HepG2 (cell line): ENCODE measurements at regions of chr5 and their contacts with region 1.

Region 1: DNA sequence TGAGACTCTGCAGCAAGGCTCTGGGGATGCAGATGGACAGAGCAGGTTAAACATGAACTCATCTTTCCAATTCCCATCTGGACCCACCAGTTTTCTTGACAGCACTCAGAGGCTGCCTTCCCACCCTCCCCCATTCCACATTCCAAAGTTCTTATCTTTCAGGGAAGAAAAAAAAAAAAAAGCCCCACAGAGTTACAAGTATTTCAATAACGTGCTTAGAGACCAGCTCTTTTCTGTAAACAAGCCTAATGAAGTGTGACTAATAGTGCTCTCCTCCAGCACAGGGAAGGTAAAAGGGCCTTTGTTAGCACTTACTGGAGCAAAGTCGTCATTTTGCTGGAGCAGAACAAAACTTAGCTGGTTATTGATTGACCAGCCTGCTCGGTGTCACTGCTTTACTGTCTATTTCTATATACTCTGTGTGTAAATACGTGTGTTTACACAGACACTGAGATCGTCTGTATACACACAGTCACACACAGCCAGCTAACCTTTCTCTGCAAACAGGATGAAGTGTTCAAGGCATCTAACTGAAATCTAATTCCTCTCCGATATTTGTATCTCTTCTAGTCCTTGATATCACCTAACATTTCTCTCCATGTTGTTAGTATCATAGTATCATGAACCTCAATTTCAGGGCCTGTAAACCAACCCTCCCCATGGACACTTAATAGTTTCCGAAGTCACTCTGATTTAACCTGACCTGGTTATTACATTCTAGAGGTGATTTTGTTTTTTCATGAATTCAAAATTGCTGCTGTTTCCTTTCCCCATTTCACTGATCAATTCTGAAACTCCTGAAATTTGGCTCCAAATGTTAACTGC is 84.9 kb downstream of the ZNF608 start:
- DNase-seq: peak; percentile 99
- ATAC-seq: peak; percentile 92
- H3K4me3 ChIP-seq: peak overlapping the region; percentile 5 to 47 (median 12); a peak in 2 of 6 replicates
- H3K27ac ChIP-seq: peak overlapping the region; percentile 61
- H3K4me1 ChIP-seq: peaks cover 78% of the 10 kb centered on the region
- H3K27me3 ChIP-seq: no peaks in the 10 kb centered on the region
- CTCF ChIP-seq: no peak
- EP300 ChIP-seq: peak; percentile 62 to 94; a peak in 3 of 4 replicates
- POLR2A ChIP-seq: no peak
- RAD21 ChIP-seq: 0 out of 2 replicates have a peak, but pooled peaks have one; percentile 10

Region 2: GRCh38 chr5:124583469-124584350 is 77.8 kb before region 1 on chr5:
- CTCF ChIA-PET with region 1: no interaction called
- POLR2A ChIA-PET with region 1: interaction called, 8 read pairs
- in situ Hi-C with region 1: loop called (anchors 5 kb)
- intact Hi-C with region 1: loop called (anchors 1 kb)
- DNase-seq: peak; percentile 65
- ATAC-seq: no peak
- H3K4me3 ChIP-seq: no peak overlapping the region
- H3K27ac ChIP-seq: no peak overlapping the region
- H3K4me1 ChIP-seq: peaks cover 58% of the 10 kb centered on the region
- H3K27me3 ChIP-seq: no peaks in the 10 kb centered on the region
- CTCF ChIP-seq: no peak
- EP300 ChIP-seq: 0 out of 4 replicates have a peak, but pooled peaks of 1 of the 2 experiments have one; percentile 8
- POLR2A ChIP-seq: no peak
- RAD21 ChIP-seq: no peak

Region 3: DNA sequence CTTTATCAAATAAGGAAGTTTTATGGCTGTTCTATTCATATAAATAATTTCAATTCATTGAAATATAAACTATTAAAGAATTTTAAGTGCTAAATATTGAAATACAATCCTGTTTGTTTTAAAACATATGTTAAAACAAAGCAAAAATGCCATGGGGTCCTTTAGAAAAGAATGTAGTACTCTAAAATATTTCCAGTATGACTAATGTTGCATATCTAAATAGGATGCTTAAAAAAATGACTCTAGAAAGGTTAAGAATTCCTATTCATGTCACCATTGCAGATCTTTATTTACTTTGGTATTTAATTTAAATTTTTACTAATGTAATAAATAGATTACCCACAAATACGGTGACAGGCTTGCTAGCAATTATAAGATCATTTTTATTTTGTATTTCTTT is 47.4 kb before region 1 on chr5:
- CTCF ChIA-PET with region 1: no interaction called
- POLR2A ChIA-PET with region 1: no interaction called
- in situ Hi-C with region 1: no loop called
- intact Hi-C with region 1: no loop called
- DNase-seq: no peak
- ATAC-seq: no peak
- H3K4me3 ChIP-seq: no peak overlapping the region
- H3K27ac ChIP-seq: no peak overlapping the region
- H3K4me1 ChIP-seq: no peaks in the 10 kb centered on the region
- H3K27me3 ChIP-seq: no peaks in the 10 kb centered on the region
- CTCF ChIP-seq: no peak
- EP300 ChIP-seq: no peak
- POLR2A ChIP-seq: no peak
- RAD21 ChIP-seq: no peak

Region 4: GRCh38 chr5:124649491-124650146 is 11.9 kb before region 1 on chr5:
- CTCF ChIA-PET with region 1: no interaction called
- POLR2A ChIA-PET with region 1: interaction called, 3 read pairs
- in situ Hi-C with region 1: no loop called
- intact Hi-C with region 1: loop called (anchors 1 kb)
- DNase-seq: no peak
- ATAC-seq: no peak
- H3K4me3 ChIP-seq: no peak overlapping the region
- H3K27ac ChIP-seq: no peak overlapping the region
- H3K4me1 ChIP-seq: peaks cover 80% of the 10 kb centered on the region
- H3K27me3 ChIP-seq: no peaks in the 10 kb centered on the region
- CTCF ChIP-seq: no peak
- EP300 ChIP-seq: no peak
- POLR2A ChIP-seq: no peak
- RAD21 ChIP-seq: no peak

Region 5: GRCh38 chr5:124806373-124807077 is 145.0 kb after region 1 on chr5:
- CTCF ChIA-PET with region 1: no interaction called
- POLR2A ChIA-PET with region 1: no interaction called
- in situ Hi-C with region 1: no loop called
- intact Hi-C with region 1: loop called (anchors 1 kb)
- DNase-seq: peak; percentile 73
- ATAC-seq: peak; percentile 96
- H3K4me3 ChIP-seq: no peak overlapping the region
- H3K27ac ChIP-seq: no peak overlapping the region
- H3K4me1 ChIP-seq: peaks cover 16% of the 10 kb centered on the region
- H3K27me3 ChIP-seq: no peaks in the 10 kb centered on the region
- CTCF ChIP-seq: no peak
- EP300 ChIP-seq: no peak
- POLR2A ChIP-seq: no peak
- RAD21 ChIP-seq: no peak

Region 6: DNA sequence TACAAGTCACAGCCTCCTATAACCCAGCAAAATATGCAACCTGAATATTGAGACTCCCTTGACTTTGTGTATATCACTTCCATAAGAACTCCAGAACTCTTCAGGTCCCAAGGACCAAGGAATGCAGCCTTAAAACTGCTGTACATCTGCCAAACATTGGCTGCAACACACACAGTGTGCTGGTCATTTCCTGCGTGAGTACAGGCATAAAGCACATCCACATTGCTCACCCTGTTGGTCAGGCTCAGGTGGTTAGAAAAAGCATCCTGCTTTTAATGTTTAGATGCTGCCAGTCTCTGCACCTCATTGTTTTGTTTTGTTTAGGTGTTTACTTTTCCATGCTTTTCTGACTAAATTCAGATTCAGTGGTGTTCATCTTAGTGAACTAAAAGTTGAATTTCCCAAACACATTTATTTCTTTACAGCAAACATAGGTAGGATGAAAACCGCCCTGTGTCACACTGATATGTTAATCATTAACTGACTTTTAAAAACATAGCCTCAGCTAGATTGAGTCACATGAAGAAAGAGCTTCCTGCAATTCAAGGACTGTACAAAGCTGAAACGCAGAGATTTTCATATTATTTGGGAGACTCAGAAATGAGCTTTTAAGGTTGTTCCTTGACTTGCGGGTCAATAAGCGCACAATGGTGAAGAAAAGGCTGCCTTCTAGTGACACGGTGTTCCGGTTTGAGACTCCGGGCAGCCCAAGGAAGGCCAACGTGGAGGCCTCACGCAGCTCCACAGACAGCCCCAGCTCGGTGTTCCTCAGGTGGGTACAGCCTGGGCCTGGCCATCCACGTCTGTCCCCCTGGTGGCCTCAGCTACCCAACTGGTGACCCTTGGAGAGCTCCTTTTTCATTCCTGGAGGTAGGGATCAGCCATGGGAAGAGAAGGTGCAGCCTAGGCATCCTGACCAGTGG is 1709.5 kb after region 1 on chr5:
- CTCF ChIA-PET with region 1: no interaction called
- POLR2A ChIA-PET with region 1: no interaction called
- in situ Hi-C with region 1: no loop called
- intact Hi-C with region 1: loop called (anchors 10 kb)
- DNase-seq: peak; percentile 75
- ATAC-seq: peak; percentile 85
- H3K4me3 ChIP-seq: peak overlapping the region; percentile 55 to 85 (median 75)
- H3K27ac ChIP-seq: peak overlapping the region; percentile 87
- H3K4me1 ChIP-seq: peaks cover 65% of the 10 kb centered on the region
- H3K27me3 ChIP-seq: no peaks in the 10 kb centered on the region; a peak in 1 of 5 replicates
- CTCF ChIP-seq: peak; percentile 50
- EP300 ChIP-seq: no peak
- POLR2A ChIP-seq: peak; percentile 51 to 74; a peak in 3 of 4 replicates
- RAD21 ChIP-seq: peak; percentile 52; the same call in 1 of the 2 replicates